Activated CD4-positive, alpha-beta T cell treated with anti-CD3 and anti-CD28 coated beads for 36 hours (primary cell): ENCODE measurements at regions of chr3 and their contacts with region 1.

Region 1: GRCh38 chr3:60081381-60082095 is 1031.7 kb upstream of the CFAP20DC start:
- DNase-seq: no peak
- ATAC-seq: no peak
- H3K4me3 Mint-ChIP-seq: peak overlapping the region; percentile 40
- H3K27ac Mint-ChIP-seq: peak overlapping the region; percentile 88
- H3K4me1 Mint-ChIP-seq: peaks cover 67% of the 10 kb centered on the region
- H3K27me3 Mint-ChIP-seq: no peaks in the 10 kb centered on the region

Region 2: GRCh38 chr3:59857589-59858346 is 223.8 kb before region 1 on chr3:
- CTCF ChIA-PET with region 1: interaction called, 4 read pairs
- POLR2A ChIA-PET with region 1: no interaction called
- intact Hi-C with region 1: loop called in 1 of 2 experiments (anchors 10 kb)
- DNase-seq: peak; percentile 89
- ATAC-seq: peak; percentile 97
- H3K4me3 Mint-ChIP-seq: peak overlapping the region; percentile 27
- H3K27ac Mint-ChIP-seq: peak overlapping the region; percentile 47
- H3K4me1 Mint-ChIP-seq: peaks cover 18% of the 10 kb centered on the region
- H3K27me3 Mint-ChIP-seq: no peaks in the 10 kb centered on the region

Region 3: GRCh38 chr3:59935025-59935424 is 146.5 kb before region 1 on chr3:
- CTCF ChIA-PET with region 1: no interaction called
- POLR2A ChIA-PET with region 1: no interaction called
- intact Hi-C with region 1: loop called (anchors 1 to 2 kb)
- DNase-seq: peak; percentile 38
- ATAC-seq: peak; percentile 96
- H3K4me3 Mint-ChIP-seq: peak overlapping the region; percentile 37
- H3K27ac Mint-ChIP-seq: peak overlapping the region; percentile 79
- H3K4me1 Mint-ChIP-seq: peaks cover 81% of the 10 kb centered on the region
- H3K27me3 Mint-ChIP-seq: no peaks in the 10 kb centered on the region

Region 4: GRCh38 chr3:60048447-60048848 is 33.1 kb before region 1 on chr3:
- CTCF ChIA-PET with region 1: interaction called, 4 read pairs
- POLR2A ChIA-PET with region 1: interaction called, 3 read pairs
- intact Hi-C with region 1: loop called (anchors 1 kb)
- DNase-seq: peak; percentile 65
- ATAC-seq: peak; percentile 76
- H3K4me3 Mint-ChIP-seq: peak overlapping the region; percentile 64
- H3K27ac Mint-ChIP-seq: peak overlapping the region; percentile 89
- H3K4me1 Mint-ChIP-seq: peaks cover 81% of the 10 kb centered on the region
- H3K27me3 Mint-ChIP-seq: no peaks in the 10 kb centered on the region

Region 5: GRCh38 chr3:60192297-60193114 is 111.0 kb after region 1 on chr3:
- CTCF ChIA-PET with region 1: no interaction called
- POLR2A ChIA-PET with region 1: no interaction called
- intact Hi-C with region 1: loop called (anchors 2 to 5 kb)
- DNase-seq: peak; percentile 61
- ATAC-seq: peak; percentile 87
- H3K4me3 Mint-ChIP-seq: no peak overlapping the region
- H3K27ac Mint-ChIP-seq: peak overlapping the region; percentile 81
- H3K4me1 Mint-ChIP-seq: peaks cover 40% of the 10 kb centered on the region
- H3K27me3 Mint-ChIP-seq: no peaks in the 10 kb centered on the region

Region 6: GRCh38 chr3:60206206-60206605 is 124.7 kb after region 1 on chr3:
- CTCF ChIA-PET with region 1: no interaction called
- POLR2A ChIA-PET with region 1: no interaction called
- intact Hi-C with region 1: no loop called
- DNase-seq: no peak
- ATAC-seq: no peak
- H3K4me3 Mint-ChIP-seq: no peak overlapping the region
- H3K27ac Mint-ChIP-seq: no peak overlapping the region
- H3K4me1 Mint-ChIP-seq: no peaks in the 10 kb centered on the region
- H3K27me3 Mint-ChIP-seq: no peaks in the 10 kb centered on the region